CD4-positive, alpha-beta memory T cell (primary cell): ENCODE measurements at regions of chr13 and their contacts with region 1.

Region 1: DNA sequence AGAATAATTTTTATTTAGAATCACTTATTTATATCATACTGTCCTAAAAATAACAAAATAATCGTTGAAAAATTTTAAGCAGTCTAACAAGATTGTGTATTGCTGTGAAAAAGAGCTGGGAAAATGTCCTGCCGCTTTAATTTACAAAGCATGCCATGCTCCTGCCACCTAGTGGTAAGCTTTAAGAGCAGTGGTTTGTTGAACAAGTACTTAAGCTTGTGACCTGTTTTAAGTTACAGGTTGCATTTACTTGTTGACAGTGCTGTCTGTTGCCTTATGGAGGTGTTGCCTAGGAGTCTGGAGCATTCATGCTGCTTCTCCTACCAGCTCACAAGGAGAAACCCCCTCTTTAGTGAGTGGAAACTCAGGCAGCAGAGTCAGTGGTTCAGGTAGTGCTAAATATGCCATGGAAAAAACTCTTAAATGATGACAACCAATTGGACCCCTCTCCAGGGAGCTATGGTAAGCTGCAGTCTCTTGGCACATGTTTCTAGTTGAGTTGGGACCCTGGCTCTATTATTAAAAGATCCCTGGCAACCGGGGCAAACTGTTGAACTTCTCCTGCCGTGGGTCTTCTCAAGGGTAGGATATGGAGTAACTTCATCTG is 68.4 kb downstream of the SPATA13 start:
- DNase-seq: peak; percentile 35 to 54 (median 44)
- H3K4me3 ChIP-seq: no peak overlapping the region
- H3K4me3 Mint-ChIP-seq: no peak overlapping the region
- H3K27ac ChIP-seq: no peak overlapping the region
- H3K27ac Mint-ChIP-seq: no peak overlapping the region
- H3K4me1 ChIP-seq: peaks cover 11% of the 10 kb centered on the region
- H3K4me1 Mint-ChIP-seq: peaks cover 7 to 28% (median 13%) of the 10 kb centered on the region in 4 donors
- H3K27me3 ChIP-seq: no peaks in the 10 kb centered on the region
- H3K27me3 Mint-ChIP-seq: no peaks in the 10 kb centered on the region

Region 2: DNA sequence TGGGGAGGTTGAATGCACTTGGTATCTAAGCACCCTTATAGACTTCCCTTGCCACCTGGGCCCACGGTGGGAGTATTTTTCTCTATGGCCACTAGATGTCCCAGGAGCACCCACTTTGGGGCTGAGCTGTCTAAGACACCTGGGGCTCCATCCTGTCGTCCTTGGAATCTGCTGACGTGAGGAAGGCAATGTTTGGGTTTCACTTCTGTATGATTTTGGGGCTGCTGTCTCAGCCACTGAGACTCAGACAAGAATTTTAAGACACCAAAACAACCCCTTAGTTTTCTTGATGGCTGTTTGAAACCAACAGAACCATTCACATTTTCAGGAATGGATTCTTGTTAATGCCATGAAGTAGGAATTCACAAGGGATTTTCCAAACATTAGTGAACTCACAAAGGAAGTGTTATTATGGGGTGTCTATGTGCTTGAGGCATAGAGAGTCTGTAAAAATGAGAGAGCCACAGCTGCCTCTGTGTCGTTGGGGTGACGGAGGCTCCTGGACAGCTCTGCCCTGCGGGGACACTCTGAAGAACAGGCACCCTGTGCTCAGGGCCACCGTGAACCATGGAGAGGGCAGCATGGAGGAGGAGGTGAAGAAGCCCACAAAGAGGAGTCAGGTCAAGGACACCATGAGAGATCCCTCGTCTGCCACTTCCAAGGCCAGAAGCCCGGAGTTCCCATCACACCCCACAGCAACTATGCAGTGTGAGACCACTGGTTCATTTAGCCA is 175.3 kb before region 1 on chr13:
- CTCF ChIA-PET with region 1: interaction called, 26 read pairs
- POLR2A ChIA-PET with region 1: no interaction called
- intact Hi-C with region 1: loop called (anchors 2 kb)
- DNase-seq: peak; percentile 51 to 63 (median 56)
- H3K4me3 ChIP-seq: no peak overlapping the region
- H3K4me3 Mint-ChIP-seq: no peak overlapping the region
- H3K27ac ChIP-seq: no peak overlapping the region
- H3K27ac Mint-ChIP-seq: peak overlapping the region in 2 of 7 donors; percentile 5 to 48
- H3K4me1 ChIP-seq: no peaks in the 10 kb centered on the region
- H3K4me1 Mint-ChIP-seq: peaks cover 2 to 9% (median 5%) of the 10 kb centered on the region in 4 donors
- H3K27me3 ChIP-seq: no peaks in the 10 kb centered on the region
- H3K27me3 Mint-ChIP-seq: peaks cover 6 to 23% of the 10 kb centered on the region in 2 donors

Region 3: DNA sequence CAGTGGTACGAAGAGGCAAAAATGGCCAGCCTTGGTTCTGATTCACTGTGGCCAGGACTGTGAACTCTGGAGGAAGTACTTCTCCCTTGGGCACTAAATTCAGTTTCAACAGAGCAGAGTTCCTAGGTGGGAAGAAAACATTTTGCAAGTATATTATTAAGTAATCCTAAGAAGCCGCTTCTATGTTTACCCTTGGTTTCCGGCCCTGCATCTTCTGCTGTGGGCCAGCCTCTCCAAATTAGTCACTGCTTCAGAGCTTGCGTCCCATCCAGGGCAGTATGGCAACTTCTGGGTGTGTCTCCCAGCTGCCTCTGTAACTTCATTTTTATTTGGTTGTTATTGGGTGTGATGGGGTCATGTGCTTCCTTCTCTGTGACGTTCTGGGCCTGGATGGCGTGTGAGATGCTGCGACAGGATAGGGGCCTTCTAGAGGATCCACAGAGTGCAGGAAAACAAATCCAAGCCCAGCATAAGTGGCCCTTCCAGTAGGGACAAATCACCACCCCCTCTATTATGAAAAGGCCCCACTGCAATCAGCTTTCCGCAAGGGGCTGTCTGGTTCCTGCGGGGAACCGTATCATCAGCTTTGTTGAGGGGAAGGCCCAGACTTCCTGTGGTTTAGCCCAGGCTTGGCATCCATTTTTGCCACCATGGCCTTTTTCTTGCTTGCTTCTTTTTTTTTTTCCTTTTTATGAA is 25.3 kb after region 1 on chr13:
- CTCF ChIA-PET with region 1: interaction called, 15 read pairs
- POLR2A ChIA-PET with region 1: interaction called, 7 read pairs
- intact Hi-C with region 1: loop called (anchors 1 kb)
- DNase-seq: peak; percentile 78 to 93 (median 83)
- H3K4me3 ChIP-seq: peak overlapping the region; percentile 94 to 98
- H3K4me3 Mint-ChIP-seq: peak overlapping the region; percentile 92 to 99 (median 97)
- H3K27ac ChIP-seq: peak overlapping the region; percentile 87
- H3K27ac Mint-ChIP-seq: peak overlapping the region; percentile 95 to 100 (median 97)
- H3K4me1 ChIP-seq: peaks cover 88% of the 10 kb centered on the region
- H3K4me1 Mint-ChIP-seq: peaks cover 62 to 99% (median 81%) of the 10 kb centered on the region in 4 donors
- H3K27me3 ChIP-seq: no peaks in the 10 kb centered on the region
- H3K27me3 Mint-ChIP-seq: no peaks in the 10 kb centered on the region

Region 4: GRCh38 chr13:24270639-24271141 is 41.7 kb after region 1 on chr13:
- CTCF ChIA-PET with region 1: interaction called, 33 read pairs
- POLR2A ChIA-PET with region 1: interaction called, 8 read pairs
- intact Hi-C with region 1: loop called (anchors 1 kb)
- DNase-seq: peak; percentile 74 to 80 (median 76)
- H3K4me3 ChIP-seq: peak overlapping the region; percentile 14 to 66
- H3K4me3 Mint-ChIP-seq: peak overlapping the region; percentile 83 to 99 (median 92)
- H3K27ac ChIP-seq: peak overlapping the region; percentile 90
- H3K27ac Mint-ChIP-seq: peak overlapping the region; percentile 98 to 100 (median 99)
- H3K4me1 ChIP-seq: peaks cover 98% of the 10 kb centered on the region
- H3K4me1 Mint-ChIP-seq: peaks cover 72 to 97% (median 85%) of the 10 kb centered on the region in 4 donors
- H3K27me3 ChIP-seq: no peaks in the 10 kb centered on the region
- H3K27me3 Mint-ChIP-seq: peaks cover 2% of the 10 kb centered on the region in 2 donors

Region 5: DNA sequence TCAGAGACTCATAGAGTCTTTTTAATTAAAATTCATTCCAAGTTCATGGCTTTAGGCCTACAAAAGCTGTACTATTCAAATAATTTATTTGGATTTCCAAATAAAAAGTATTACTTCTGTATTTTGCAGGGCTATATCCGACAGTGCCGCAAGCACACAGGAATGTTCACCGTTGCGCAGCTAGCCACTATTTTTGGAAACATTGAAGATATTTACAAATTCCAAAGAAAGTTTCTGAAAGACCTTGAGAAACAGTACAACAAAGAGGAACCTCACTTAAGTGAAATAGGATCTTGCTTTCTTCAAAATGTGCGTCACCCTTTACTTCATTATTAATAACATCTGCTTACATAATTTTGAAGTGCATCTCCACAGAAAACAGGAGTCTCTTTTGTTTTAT is 59.9 kb after region 1 on chr13:
- CTCF ChIA-PET with region 1: interaction called, 11 read pairs
- POLR2A ChIA-PET with region 1: no interaction called
- intact Hi-C with region 1: no loop called
- DNase-seq: no peak
- H3K4me3 ChIP-seq: no peak overlapping the region
- H3K4me3 Mint-ChIP-seq: no peak overlapping the region
- H3K27ac ChIP-seq: no peak overlapping the region
- H3K27ac Mint-ChIP-seq: no peak overlapping the region
- H3K4me1 ChIP-seq: no peaks in the 10 kb centered on the region
- H3K4me1 Mint-ChIP-seq: peaks cover 0 to 5% (median 4%) of the 10 kb centered on the region in 4 donors
- H3K27me3 ChIP-seq: no peaks in the 10 kb centered on the region
- H3K27me3 Mint-ChIP-seq: no peaks in the 10 kb centered on the region